Activated CD8-positive, alpha-beta T cell treated with anti-CD3 and anti-CD28 coated beads for 36 hours (primary cell): ENCODE measurements at regions of chr17 and their contacts with region 1.

Region 1: GRCh38 chr17:4004517-4005295 is 40.5 kb upstream of the ATP2A3 start:
- DNase-seq: peak; percentile 62
- ATAC-seq: peak; percentile 93
- H3K4me3 Mint-ChIP-seq: no peak overlapping the region
- H3K27ac Mint-ChIP-seq: no peak overlapping the region
- H3K4me1 Mint-ChIP-seq: peaks cover 5% of the 10 kb centered on the region
- H3K27me3 Mint-ChIP-seq: no peaks in the 10 kb centered on the region
- CTCF ChIP-seq: peak; percentile 100

Region 2: DNA sequence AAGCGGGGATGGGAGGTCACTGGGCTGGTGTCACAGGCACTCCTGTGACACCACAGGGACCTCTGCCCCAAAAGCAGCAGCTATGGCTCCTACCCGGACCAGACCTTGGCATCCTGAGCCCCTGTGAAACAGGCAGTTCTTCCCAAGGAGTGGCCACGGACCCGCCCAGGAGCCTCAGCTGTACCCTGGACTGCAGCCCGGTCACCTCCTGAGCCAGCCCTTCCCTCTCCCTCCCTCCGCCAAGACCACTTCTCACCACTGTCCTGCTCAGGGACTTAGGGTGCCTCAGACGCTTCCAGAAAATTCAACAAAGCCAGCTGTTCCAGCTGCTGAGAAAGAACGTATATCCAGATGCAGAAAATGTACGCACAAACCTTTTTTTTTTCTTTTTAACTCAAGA is 144.8 kb before region 1 on chr17:
- CTCF ChIA-PET with region 1: interaction called, 8 read pairs
- POLR2A ChIA-PET with region 1: no interaction called
- intact Hi-C with region 1: loop called (anchors 5 kb)
- DNase-seq: no peak
- ATAC-seq: no peak
- H3K4me3 Mint-ChIP-seq: no peak overlapping the region
- H3K27ac Mint-ChIP-seq: no peak overlapping the region
- H3K4me1 Mint-ChIP-seq: no peaks in the 10 kb centered on the region
- H3K27me3 Mint-ChIP-seq: no peaks in the 10 kb centered on the region
- CTCF ChIP-seq: no peak

Region 3: GRCh38 chr17:3965118-3965803 is 39.4 kb before region 1 on chr17:
- CTCF ChIA-PET with region 1: interaction called, 8 read pairs
- POLR2A ChIA-PET with region 1: interaction called, 3 read pairs
- intact Hi-C with region 1: loop called (anchors 5 kb)
- DNase-seq: peak; percentile 86
- ATAC-seq: peak; percentile 64
- H3K4me3 Mint-ChIP-seq: peak overlapping the region; percentile 86
- H3K27ac Mint-ChIP-seq: peak overlapping the region; percentile 91
- H3K4me1 Mint-ChIP-seq: peaks cover 37% of the 10 kb centered on the region
- H3K27me3 Mint-ChIP-seq: no peaks in the 10 kb centered on the region
- CTCF ChIP-seq: no peak

Region 4: DNA sequence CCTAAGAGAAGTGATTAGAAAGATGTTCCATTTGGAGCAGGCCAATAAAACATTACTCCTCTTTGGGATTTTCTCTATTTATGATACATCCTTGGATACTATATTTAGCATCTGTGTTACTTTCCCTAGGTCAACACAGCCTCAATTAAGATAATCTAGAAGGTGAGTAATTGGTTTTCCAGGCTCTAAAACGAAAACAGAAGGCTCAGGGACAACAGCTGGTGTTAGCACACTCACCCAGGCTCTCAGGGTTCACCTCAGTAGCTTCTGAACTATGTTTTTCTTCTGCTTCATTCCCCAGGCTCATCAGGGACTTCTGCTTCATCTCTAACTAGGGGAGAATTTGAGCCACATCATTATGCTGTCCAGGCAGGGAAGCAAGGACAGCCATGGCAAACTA is 61.5 kb after region 1 on chr17:
- CTCF ChIA-PET with region 1: no interaction called
- POLR2A ChIA-PET with region 1: no interaction called
- intact Hi-C with region 1: no loop called
- DNase-seq: no peak
- ATAC-seq: no peak
- H3K4me3 Mint-ChIP-seq: no peak overlapping the region
- H3K27ac Mint-ChIP-seq: no peak overlapping the region
- H3K4me1 Mint-ChIP-seq: no peaks in the 10 kb centered on the region
- H3K27me3 Mint-ChIP-seq: no peaks in the 10 kb centered on the region
- CTCF ChIP-seq: no peak

Region 5: GRCh38 chr17:4118015-4118743 is 113.5 kb after region 1 on chr17:
- CTCF ChIA-PET with region 1: no interaction called
- POLR2A ChIA-PET with region 1: no interaction called
- intact Hi-C with region 1: no loop called
- DNase-seq: no peak
- ATAC-seq: no peak
- H3K4me3 Mint-ChIP-seq: no peak overlapping the region
- H3K27ac Mint-ChIP-seq: peak overlapping the region; percentile 66
- H3K4me1 Mint-ChIP-seq: peaks cover 4% of the 10 kb centered on the region
- H3K27me3 Mint-ChIP-seq: no peaks in the 10 kb centered on the region
- CTCF ChIP-seq: no peak